ENCODE measurements at regions of chr20 and their contacts with region 1.

Region 1: GRCh38 chr20:3753098-3753980 is 14.2 kb downstream of the ADISSP start:
- DNase-seq: peak in 1 of 2 experiments; percentile 56
- H3K4me3 ChIP-seq: no peak overlapping the region
- H3K4me3 Mint-ChIP-seq: no peak overlapping the region
- H3K27ac Mint-ChIP-seq: no peak overlapping the region
- H3K4me1 ChIP-seq: no peaks in the 10 kb centered on the region
- H3K4me1 Mint-ChIP-seq: no peaks in the 10 kb centered on the region
- H3K27me3 ChIP-seq: no peaks in the 10 kb centered on the region
- H3K27me3 Mint-ChIP-seq: no peaks in the 10 kb centered on the region
- CTCF ChIP-seq: peak; percentile 59 to 60

Region 2: DNA sequence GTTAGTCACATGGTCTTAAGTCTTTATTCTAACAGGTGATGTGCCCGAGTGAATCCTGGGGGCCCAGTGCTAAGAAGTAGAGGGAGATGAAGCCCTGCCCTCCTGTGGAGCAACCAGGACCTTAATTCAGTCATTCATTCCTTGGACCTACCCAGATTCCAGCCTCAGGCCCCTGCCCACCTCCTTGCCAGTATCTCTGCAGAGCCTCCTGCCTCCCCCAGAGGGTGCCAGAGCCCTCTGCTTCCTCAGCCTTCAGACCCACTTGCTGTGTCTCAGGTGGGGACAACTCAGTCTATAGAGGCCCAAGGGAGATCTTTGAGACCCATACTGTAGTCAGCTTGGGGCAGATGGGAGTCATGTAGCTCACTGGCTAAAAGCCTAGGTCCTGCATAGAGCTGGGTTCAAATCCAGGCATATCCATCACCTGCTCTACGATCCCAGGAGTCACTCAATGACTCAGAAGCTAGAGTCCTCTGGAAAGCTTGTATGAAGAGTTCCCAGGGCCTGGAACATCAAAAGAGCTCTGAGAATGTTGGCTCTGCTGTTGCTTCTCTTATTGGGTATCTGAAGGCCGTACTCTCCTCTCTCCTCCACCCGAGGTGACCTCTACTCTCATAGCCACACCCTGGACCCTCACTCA is 37.0 kb before region 1 on chr20:
- CTCF ChIA-PET with region 1: interaction called, 5 read pairs
- POLR2A ChIA-PET with region 1: no interaction called
- intact Hi-C with region 1: loop called (anchors 1 kb)
- DNase-seq: peak; percentile 77
- H3K4me3 ChIP-seq: no peak overlapping the region
- H3K4me3 Mint-ChIP-seq: no peak overlapping the region
- H3K27ac Mint-ChIP-seq: peak overlapping the region; percentile 6
- H3K4me1 ChIP-seq: no peaks in the 10 kb centered on the region
- H3K4me1 Mint-ChIP-seq: no peaks in the 10 kb centered on the region
- H3K27me3 ChIP-seq: no peaks in the 10 kb centered on the region; the same call in 1 of the 2 replicates
- H3K27me3 Mint-ChIP-seq: no peaks in the 10 kb centered on the region
- CTCF ChIP-seq: peak; percentile 80 to 94

Region 3: DNA sequence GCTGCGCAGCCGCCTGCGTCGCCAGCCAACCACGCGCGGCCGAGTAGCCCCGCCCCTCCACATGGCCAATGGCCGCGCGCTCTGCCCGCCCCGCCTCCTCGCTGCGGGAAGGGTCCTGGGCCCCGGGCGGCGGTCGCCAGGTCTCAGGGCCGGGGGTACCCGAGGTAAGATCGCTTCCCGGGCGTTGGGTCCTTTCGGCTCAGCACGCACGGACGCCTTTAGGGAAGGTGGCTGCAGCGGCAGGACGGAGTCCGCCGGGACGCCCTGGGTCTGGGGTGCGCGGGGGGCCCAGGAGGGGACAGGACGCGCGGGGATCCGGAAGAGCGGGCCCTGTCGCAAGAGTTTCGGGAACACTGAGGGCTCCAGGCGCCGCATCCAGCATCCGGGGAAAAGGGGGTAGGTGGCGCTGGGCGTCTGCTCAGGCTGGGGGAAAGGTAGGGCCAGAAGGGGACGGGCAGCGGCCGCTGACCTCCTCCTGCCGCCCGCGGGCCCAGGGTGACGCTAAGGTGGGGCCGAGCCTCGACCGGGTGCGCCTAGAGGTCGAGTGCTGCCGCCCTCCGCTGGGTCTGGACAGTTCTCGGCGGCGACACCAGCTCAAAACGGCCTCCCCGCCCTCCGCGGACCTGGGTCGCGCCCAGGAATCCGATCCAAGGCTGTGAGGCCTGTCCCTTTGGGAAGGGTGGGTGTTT is 93.5 kb after region 1 on chr20 and contains the start of gene MAVS:
- CTCF ChIA-PET with region 1: no interaction called
- POLR2A ChIA-PET with region 1: no interaction called
- intact Hi-C with region 1: no loop called
- DNase-seq: peak; percentile 90 to 95
- H3K4me3 ChIP-seq: peak within 1 kb of the TSS; percentile 57
- H3K4me3 Mint-ChIP-seq: peak within 1 kb of the TSS; percentile 92
- H3K27ac Mint-ChIP-seq: peak within 1 kb of the TSS; percentile 94
- H3K4me1 ChIP-seq: peaks cover 12% of the 10 kb centered on the region
- H3K4me1 Mint-ChIP-seq: peaks cover 10% of the 10 kb centered on the region
- H3K27me3 ChIP-seq: no peaks in the 10 kb centered on the region
- H3K27me3 Mint-ChIP-seq: no peaks in the 10 kb centered on the region
- CTCF ChIP-seq: no peak
- total RNA-seq, gene MAVS: 49.3 and 56.4 TPM in 2 replicates

Measured in Caco-2 (cell line).